ENCODE measurements at regions of chr1 and their contacts with region 1.

Region 1: DNA sequence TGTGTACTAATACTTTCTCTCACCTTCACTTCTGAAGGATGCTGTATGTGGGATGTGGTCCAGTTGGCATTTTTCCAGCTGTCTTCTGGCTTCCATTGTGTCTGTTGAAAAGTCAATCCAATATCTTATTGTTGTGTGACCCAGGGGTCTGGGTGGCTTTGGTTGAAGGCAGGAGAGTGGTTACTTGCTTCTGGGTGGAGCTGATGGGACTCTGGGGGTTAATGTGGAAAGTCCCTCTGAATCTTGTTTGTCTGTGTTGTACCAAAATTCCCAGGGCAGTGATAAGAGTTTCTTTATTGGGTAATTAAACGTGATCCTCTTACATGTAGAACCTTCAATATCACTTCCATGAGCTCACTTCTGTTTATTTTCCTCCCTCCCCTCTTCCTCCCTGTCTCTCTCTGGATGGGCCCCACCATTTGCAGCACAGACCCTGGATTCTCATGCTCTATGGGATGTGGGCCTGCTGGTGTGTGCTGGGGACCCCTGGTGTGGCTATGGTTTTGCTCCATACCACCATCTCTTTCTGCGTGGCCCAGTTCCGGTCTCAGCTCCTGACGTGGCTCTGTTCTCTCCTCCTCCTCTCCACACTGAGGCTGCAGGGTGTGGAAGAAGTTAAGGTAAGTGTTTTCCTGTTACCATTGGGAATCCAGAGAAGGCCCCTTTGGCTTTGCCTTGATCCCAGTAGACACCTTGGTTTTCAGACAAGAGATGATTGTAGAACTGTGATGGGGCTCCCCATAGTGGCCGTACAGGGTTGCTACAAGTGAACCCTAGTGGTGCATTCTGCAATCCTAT is 71.5 kb downstream of the HHAT start:
- DNase-seq: peak; percentile 58 to 74
- H3K4me3 ChIP-seq: no peak overlapping the region
- H3K27ac ChIP-seq: no peak overlapping the region
- H3K4me1 ChIP-seq: no peaks in the 10 kb centered on the region
- H3K27me3 ChIP-seq: no peaks in the 10 kb centered on the region
- CTCF ChIP-seq: peak in 5 of 7 experiments; percentile 40 to 75 (median 67)
- EP300 ChIP-seq: no peak
- POLR2A ChIP-seq: no peak

Region 2: DNA sequence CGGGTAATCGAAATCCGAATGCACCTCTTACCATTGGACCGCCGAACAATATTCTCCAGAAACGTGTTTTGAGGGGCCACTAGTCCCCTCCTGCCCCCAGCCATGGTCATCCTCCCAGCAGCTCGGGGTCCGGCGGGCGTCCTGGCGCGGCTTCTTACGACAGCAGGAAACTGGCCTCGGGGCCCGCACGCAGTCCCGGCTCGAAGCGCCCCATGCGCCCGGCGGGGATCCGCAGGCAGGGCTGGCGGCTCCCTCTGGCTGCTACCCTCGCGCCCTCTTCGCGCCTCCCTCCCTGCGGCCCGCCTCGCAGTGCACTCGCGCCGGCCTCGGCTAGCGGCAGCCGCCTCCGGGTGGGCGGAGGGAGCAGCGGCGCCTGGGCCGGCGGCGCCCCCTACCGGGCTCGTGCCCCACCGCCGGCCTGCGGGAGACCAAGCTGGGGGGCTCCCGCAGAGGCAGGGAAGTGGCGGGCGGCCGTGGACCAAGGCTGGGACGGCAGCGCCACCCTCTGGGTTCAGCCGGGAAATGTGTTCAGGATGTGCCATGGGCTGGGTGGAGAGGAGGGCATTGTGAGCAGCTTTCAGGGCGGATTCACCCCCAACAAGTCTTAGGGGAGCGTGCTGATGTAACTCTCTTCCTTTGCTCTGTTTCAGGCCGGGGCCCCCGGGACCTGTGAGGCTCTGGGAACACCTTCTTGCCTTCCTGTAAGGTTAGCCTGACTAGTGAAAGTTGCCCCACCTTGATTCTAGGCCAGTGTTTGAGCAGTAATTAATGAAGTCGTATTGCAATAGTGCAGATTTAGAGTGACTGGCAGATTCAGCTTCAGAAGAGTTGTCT is 733.8 kb after region 1 on chr1 and contains the start of gene KCNH1:
- intact Hi-C with region 1: loop called (anchors 10 kb)
- DNase-seq: peak; percentile 66 to 94
- H3K4me3 ChIP-seq: peak within 1 kb of the TSS; percentile 46 to 57 (median 50)
- H3K27ac ChIP-seq: peak within 1 kb of the TSS in 3 of 5 donors; percentile 15 to 41 (median 22)
- H3K4me1 ChIP-seq: peaks cover 11 to 22% (median 17%) of the 10 kb centered on the region in 4 donors
- H3K27me3 ChIP-seq: peaks cover 0 to 79% (median 26%) of the 10 kb centered on the region in 3 donors
- CTCF ChIP-seq: peak in 5 of 7 experiments; percentile 36 to 84 (median 78)
- EP300 ChIP-seq: no peak
- POLR2A ChIP-seq: no peak
- total RNA-seq, gene KCNH1: 3.2 to 6.8 (median 3.4) TPM in 4 of 5 donors, not detected in the other

Measured in stomach (tissue), 19 donors.